Mucosa of descending colon (tissue), 3 donors: ENCODE measurements at regions of chr9 and their contacts with region 1.

Region 1: DNA sequence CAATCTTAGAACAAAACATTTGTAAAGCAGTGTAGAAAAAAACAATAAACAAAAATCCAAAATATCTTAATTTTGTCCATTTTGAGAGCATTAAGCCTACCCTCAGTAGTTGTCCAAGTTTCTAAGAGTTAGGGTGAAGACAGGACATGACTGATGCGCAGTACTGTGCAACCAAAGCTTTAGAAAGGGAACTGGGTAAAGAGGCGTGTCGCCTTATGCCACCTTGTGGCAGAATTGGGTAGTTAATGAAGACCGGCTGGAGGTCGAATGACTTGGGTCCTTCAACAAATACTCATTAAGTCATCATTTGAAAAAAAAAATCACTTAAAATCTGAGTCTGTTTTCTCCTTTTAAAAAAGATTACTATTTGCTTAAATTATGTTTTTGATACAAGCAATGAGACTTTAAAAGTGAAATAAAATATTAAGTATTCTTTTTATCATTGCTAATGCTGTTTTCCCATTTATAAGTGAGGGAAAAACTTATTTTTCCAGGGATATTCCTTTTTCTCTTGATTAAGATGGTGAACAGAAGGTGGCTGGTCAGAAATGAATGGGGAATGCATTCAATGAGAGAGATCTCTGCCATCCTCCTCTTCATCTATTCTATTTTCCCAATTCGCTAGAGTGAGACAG is 3.5 kb upstream of the RNF20 start:
- DNase-seq: peak in 2 of 3 donors; percentile 50 to 88
- ATAC-seq: peak; percentile 52
- H3K4me3 ChIP-seq: no peak overlapping the region
- H3K4me1 ChIP-seq: peaks cover 10% of the 10 kb centered on the region
- CTCF ChIP-seq: peak; percentile 44

Region 2: GRCh38 chr9:101458955-101459631 is 71.1 kb before region 1 on chr9:
- intact Hi-C with region 1: loop called (anchors 1 to 5 kb)
- DNase-seq: peak in 1 of 3 donors; percentile 68
- ATAC-seq: peak; percentile 97
- H3K4me3 ChIP-seq: no peak overlapping the region
- H3K4me1 ChIP-seq: no peaks in the 10 kb centered on the region
- CTCF ChIP-seq: peak; percentile 26

Region 3: DNA sequence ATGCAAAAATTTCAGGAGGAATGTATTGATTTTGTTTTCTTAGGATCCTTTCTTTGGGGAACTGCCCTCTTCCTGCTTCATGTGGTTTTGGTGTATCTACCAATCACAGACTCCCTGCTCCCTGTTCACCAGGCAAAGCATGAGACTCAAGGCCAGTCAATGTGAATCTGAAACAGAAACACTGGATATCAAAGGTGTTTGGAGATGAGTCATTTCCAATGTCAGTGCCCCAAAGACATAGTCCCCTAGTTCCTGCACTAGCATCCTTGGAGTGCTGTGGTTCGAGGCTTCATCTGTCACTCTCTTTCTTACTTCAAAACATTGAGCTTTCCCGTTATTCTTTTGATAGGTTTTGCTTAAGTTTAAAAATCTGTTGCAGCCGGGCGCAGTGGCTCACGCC is 56.5 kb after region 1 on chr9:
- intact Hi-C with region 1: no loop called
- DNase-seq: no peak
- ATAC-seq: peak; percentile 54
- H3K4me3 ChIP-seq: no peak overlapping the region
- H3K4me1 ChIP-seq: no peaks in the 10 kb centered on the region
- CTCF ChIP-seq: no peak

Region 4: DNA sequence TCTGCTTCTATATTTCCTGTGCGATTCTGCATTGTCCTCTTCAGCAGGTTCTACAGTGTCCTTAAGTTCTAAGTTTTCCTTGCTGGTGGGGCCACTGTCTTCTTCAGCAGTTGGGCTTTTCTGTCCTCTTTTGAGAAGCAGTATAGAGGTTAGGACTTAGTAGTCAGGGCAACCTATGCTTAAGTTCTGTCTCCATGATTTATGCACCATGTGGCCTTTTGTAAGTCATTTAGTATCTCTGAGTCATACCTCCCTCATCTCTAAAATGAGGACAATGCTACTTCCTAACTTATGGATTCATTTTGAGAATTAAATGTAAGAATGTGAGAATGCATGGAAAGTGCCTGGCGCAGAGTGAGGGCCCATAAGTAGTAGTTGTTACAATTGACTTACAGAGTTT is 161.5 kb after region 1 on chr9:
- intact Hi-C with region 1: no loop called
- DNase-seq: no peak
- ATAC-seq: no peak
- H3K4me3 ChIP-seq: no peak overlapping the region
- H3K4me1 ChIP-seq: no peaks in the 10 kb centered on the region
- CTCF ChIP-seq: no peak